Sciatic nerve (tissue), 2 donors: ENCODE measurements at regions of chr3 and their contacts with region 1.

Region 1: DNA sequence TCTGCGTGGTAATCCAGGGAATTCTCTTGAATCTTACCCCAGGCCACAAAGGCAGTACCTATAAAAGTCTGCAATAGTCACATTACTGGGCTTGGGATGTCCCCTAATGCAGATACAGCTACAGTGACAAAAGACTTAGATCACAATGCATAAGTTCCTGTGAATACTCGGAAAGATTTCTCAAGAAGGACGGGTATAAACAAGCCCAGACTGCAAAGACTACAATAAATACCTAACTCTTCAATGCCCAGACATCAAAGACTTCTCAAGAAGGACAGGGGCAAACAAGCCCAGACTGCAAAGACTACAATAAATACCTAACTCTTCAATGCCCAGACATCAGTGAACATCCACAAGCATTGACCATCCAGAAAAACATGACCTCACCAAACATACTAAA is 50.9 kb downstream of the NUDT16 start:
- DNase-seq: no peak
- ATAC-seq: no peak

Region 2: DNA sequence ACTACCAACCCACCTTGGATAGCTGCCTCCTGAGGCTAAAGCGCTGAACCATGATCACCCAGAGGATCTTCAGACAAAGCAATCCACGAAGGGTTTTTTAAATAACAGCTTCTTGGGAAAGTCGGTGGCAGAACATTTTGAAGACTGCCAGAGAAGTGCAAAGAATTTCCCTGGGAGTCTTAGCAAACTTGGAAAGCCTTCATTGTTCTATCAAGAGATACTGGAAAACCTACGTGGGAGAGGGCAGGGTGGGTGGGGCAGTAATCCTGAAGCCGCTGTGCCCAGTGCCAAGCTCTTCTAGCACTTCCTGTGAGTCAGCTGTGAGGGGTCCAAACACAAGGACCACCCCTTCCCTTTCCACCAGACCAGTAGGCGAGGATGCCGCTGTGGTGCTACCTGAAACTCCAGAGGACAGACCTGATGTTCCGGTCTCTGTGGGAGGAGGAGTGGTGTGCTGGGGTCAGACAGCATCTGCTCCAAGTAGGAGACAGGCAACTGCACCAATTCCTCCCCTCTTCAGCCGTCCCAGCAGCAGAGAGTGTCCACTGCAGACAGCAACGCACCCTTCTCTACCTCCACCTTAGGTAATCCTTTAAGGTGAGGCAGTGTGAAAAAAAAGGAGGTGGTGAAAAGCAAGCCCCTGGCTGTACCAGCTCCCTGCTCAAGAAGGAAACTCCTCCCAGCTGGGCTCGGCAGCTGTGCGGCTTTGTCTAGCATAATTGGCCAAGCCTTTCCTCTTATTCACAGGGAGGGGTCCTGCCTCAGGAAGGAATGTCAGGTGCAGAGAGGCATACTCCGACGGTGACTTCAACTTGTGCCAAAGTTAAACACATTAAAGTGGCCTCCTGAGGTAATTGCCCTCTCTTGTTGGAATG is 1637.9 kb before region 1 on chr3:
- intact Hi-C with region 1: no loop called
- DNase-seq: no peak
- ATAC-seq: peak; percentile 48

Region 3: GRCh38 chr3:131568460-131568859 is 136.0 kb after region 1 on chr3:
- intact Hi-C with region 1: loop called (anchors 5 kb)
- DNase-seq: no peak
- ATAC-seq: no peak

Region 4: DNA sequence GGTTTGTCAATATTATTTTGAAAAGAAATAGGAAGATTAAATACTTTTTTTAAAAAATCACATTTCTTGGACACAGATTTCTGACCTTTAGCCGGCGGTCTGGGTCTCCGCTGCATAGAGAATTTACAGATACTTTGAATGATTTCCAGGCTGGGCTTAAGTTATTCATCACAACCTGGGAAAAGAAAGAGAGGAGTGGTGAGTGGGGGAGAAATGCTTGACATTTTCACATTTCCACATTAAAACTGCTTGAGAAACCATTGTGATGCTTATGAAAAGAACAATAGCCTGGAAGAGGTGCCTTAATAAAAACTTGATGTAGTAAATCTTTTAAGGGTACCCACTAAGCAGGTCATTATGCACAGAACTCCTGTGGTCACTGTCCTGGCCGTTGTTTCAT is 237.1 kb after region 1 on chr3:
- intact Hi-C with region 1: no loop called
- DNase-seq: no peak
- ATAC-seq: no peak